Caco-2 (cell line): ENCODE measurements at regions of chrX and their contacts with region 1.

Region 1: DNA sequence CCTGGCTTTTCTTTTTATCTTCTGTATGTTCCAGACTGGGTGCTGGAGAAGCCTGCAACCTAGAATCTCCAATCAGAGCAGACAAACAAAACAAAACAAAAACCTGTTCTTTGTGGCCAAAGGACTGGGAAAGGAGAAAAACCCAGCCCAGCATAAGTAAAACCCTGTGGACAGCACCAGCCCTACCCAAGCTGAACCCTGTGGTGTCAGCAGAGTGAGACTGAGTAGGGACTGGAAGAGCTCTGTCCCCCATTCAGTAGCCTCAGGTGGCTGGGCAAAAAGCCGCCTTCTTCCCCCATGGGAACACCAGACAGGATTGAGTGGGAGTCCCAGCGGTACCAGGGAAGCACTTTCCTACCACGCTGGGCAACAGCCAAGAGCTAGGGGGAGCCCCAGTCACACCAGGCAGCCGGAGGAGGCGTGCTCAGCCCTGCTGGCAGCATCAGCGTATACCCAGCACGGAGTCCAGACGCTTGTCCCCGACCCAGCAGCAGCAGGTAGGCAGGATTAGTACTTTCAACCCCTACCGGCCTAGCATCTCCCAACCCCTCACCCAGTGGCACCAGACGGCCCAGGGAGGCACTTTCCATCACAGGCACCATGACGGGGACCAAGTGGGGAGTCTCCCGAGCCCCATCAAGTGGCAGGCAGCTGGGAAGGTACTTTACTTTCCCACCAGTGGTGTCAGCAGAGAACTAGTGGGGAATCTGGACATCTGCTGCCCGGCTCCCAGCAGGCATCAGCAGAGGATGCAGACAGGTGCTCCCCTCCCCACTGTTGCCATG is 8.6 kb upstream of the JADE3 start:
- DNase-seq: peak; percentile 81 to 82
- H3K4me3 ChIP-seq: peak overlapping the region; percentile 39
- H3K4me3 Mint-ChIP-seq: peak overlapping the region; percentile 76
- H3K27ac Mint-ChIP-seq: no peak overlapping the region
- H3K4me1 ChIP-seq: peaks cover 4% of the 10 kb centered on the region; the same call in 1 of the 2 replicates
- H3K4me1 Mint-ChIP-seq: no peaks in the 10 kb centered on the region
- H3K27me3 ChIP-seq: no peaks in the 10 kb centered on the region
- H3K27me3 Mint-ChIP-seq: no peaks in the 10 kb centered on the region
- CTCF ChIP-seq: peak; percentile 43 to 87

Region 2: DNA sequence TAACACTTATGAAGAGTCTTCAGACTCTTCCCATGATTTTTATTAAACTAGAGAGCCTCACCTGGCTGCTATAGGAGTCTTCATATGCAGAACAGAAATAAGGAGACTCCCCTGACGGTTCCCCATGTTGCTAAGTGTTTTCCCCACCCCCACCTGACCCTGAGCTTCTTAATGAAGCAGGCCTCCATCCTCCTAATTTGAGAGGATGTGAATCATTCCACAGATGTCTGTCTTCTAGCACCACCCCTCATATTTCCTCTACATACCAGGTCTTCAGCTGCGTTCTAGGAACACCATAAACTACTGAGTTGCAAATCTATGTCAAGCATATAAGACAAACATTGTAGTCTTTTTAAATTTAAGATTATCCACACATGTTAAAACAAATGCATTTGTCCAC is 29.9 kb before region 1 on chrX:
- CTCF ChIA-PET with region 1: no interaction called
- POLR2A ChIA-PET with region 1: no interaction called
- intact Hi-C with region 1: no loop called
- DNase-seq: no peak
- H3K4me3 ChIP-seq: no peak overlapping the region
- H3K4me3 Mint-ChIP-seq: no peak overlapping the region
- H3K27ac Mint-ChIP-seq: no peak overlapping the region
- H3K4me1 ChIP-seq: no peaks in the 10 kb centered on the region
- H3K4me1 Mint-ChIP-seq: no peaks in the 10 kb centered on the region
- H3K27me3 ChIP-seq: no peaks in the 10 kb centered on the region
- H3K27me3 Mint-ChIP-seq: no peaks in the 10 kb centered on the region
- CTCF ChIP-seq: no peak

Region 3: GRCh38 chrX:47030339-47030738 is 126.7 kb after region 1 on chrX:
- CTCF ChIA-PET with region 1: interaction called, 4 read pairs
- POLR2A ChIA-PET with region 1: no interaction called
- intact Hi-C with region 1: loop called (anchors 1 kb)
- DNase-seq: peak in 1 of 2 experiments; percentile 47
- H3K4me3 ChIP-seq: no peak overlapping the region
- H3K4me3 Mint-ChIP-seq: no peak overlapping the region
- H3K27ac Mint-ChIP-seq: no peak overlapping the region
- H3K4me1 ChIP-seq: no peaks in the 10 kb centered on the region
- H3K4me1 Mint-ChIP-seq: no peaks in the 10 kb centered on the region
- H3K27me3 ChIP-seq: no peaks in the 10 kb centered on the region
- H3K27me3 Mint-ChIP-seq: no peaks in the 10 kb centered on the region
- CTCF ChIP-seq: peak; percentile 38 to 42